Activated CD4-positive, alpha-beta T cell treated with anti-CD3 and anti-CD28 coated beads, Interleukin-2, amount 10 ng/mL, durations not matched to agents 24 days and 14 days (primary cell): ENCODE measurements at regions of chr7 and their contacts with region 1.

Region 1: GRCh38 chr7:17871815-17872533 is 68.3 kb downstream of the SNX13 start:
- DNase-seq: no peak
- H3K4me3 Mint-ChIP-seq: no peak overlapping the region
- H3K27ac Mint-ChIP-seq: no peak overlapping the region
- H3K4me1 Mint-ChIP-seq: peaks cover 9% of the 10 kb centered on the region
- H3K27me3 Mint-ChIP-seq: no peaks in the 10 kb centered on the region

Region 2: GRCh38 chr7:17434841-17435692 is 436.9 kb before region 1 on chr7:
- intact Hi-C with region 1: no loop called
- DNase-seq: no peak
- H3K4me3 Mint-ChIP-seq: no peak overlapping the region
- H3K27ac Mint-ChIP-seq: no peak overlapping the region
- H3K4me1 Mint-ChIP-seq: no peaks in the 10 kb centered on the region
- H3K27me3 Mint-ChIP-seq: no peaks in the 10 kb centered on the region

Region 3: GRCh38 chr7:17929647-17930395 is 57.8 kb after region 1 on chr7:
- intact Hi-C with region 1: loop called (anchors 5 kb)
- DNase-seq: no peak
- H3K4me3 Mint-ChIP-seq: no peak overlapping the region
- H3K27ac Mint-ChIP-seq: no peak overlapping the region
- H3K4me1 Mint-ChIP-seq: peaks cover 35% of the 10 kb centered on the region
- H3K27me3 Mint-ChIP-seq: no peaks in the 10 kb centered on the region